Right cardiac atrium (tissue), 5 donors: ENCODE measurements at regions of chr15 and their contacts with region 1.

Region 1: GRCh38 chr15:33756961-33757360 is 211.3 kb upstream of the CHRM5 start:
- DNase-seq: no peak
- ATAC-seq: no peak
- H3K4me3 ChIP-seq: no peak overlapping the region
- H3K27ac ChIP-seq: no peak overlapping the region
- H3K4me1 ChIP-seq: no peaks in the 10 kb centered on the region
- H3K27me3 ChIP-seq: no peaks in the 10 kb centered on the region

Region 2: DNA sequence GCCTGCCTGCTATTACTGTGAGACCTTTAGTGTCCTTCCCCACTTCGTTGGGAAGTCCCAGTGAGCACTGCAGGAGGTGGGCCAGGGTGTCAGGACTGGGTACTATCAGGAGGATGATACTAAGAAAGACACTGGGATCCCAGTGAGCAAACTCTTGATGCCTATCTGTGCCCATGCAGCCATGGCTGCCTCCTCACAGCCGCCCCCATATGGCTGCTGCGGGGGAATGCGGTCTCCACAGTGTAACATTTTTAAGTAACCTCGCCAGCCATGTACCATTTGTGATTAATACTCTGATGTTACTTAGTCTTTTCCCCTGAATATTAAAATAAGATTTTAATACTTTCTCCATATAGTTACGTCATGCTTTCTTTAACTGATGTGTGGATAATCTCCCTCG is 134.0 kb before region 1 on chr15:
- intact Hi-C with region 1: no loop called
- DNase-seq: no peak
- ATAC-seq: no peak
- H3K4me3 ChIP-seq: no peak overlapping the region
- H3K27ac ChIP-seq: no peak overlapping the region
- H3K4me1 ChIP-seq: no peaks in the 10 kb centered on the region
- H3K27me3 ChIP-seq: no peaks in the 10 kb centered on the region

Region 3: DNA sequence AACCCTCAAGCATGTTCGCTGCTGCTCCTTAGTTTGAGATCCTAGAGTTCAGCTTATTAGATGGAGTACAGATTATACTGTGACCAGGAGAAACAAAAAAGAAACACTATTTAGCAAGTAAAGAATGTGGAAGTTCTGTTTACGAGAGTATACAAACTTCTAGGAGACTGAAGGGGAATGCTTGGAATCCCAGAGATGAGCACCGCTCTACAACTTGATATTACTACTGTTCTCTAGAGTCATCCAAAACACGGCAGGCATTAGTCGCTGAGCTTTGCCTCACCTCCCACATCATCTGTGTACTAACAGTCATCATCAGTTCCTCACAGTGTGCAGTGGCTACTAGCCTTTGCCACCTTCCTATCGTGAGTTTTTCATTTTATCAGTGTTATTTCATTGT is 89.9 kb after region 1 on chr15:
- intact Hi-C with region 1: no loop called
- DNase-seq: no peak
- ATAC-seq: no peak
- H3K4me3 ChIP-seq: no peak overlapping the region
- H3K27ac ChIP-seq: no peak overlapping the region
- H3K4me1 ChIP-seq: no peaks in the 10 kb centered on the region
- H3K27me3 ChIP-seq: no peaks in the 10 kb centered on the region

Region 4: GRCh38 chr15:33860754-33861153 is 103.8 kb after region 1 on chr15:
- intact Hi-C with region 1: loop called in 1 of 4 experiments (anchors 10 kb)
- DNase-seq: no peak
- ATAC-seq: no peak
- H3K4me3 ChIP-seq: no peak overlapping the region
- H3K27ac ChIP-seq: no peak overlapping the region
- H3K4me1 ChIP-seq: no peaks in the 10 kb centered on the region
- H3K27me3 ChIP-seq: no peaks in the 10 kb centered on the region